GM13976 (cell line): ENCODE measurements at regions of chr11 and their contacts with region 1.

Region 1: DNA sequence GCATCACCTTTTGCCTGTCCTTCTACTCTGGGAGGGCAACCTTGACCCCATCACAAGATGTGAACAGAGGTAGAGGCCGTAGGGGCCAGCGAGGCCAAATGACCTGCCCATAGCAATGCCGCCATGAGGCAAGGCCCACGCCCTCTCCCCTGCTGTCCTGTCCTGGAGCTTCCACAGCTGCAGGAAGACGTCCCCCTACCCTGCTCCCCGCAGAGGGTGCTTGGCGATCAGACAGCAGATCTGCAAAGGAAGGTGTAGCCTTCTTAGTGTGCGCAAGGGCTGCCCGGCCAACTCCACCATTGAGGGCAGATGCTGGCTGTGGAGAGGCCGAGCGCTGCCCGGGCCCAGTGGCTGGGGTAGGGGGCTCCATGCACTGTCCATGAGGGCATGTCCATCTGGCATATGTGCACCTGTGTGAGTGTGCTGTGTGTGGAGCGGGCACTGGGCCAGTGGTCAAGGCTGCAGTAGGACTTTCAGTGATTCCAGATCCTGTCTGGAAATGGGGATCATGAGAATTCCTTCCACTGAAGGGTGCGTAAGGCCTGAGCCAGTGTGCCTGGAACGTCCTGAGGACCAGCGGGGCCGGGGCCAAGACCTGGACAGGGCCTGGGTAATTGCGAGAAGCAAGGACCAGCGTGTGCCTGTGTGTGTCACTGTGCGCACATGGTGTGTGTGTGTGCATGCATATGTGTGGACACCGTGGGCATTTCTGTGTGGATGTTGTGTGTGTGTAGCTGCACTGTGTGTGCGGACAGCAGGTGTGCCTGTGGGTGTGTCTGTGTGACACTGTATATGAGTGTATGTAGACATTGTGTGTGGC is 11.0 kb downstream of the TRPM5 start:
- DNase-seq: no peak
- CTCF ChIP-seq: no peak

Region 2: GRCh38 chr11:2532704-2533586 is 99.6 kb after region 1 on chr11:
- in situ Hi-C with region 1: loop called (anchors 5 kb)
- DNase-seq: peak; percentile 91
- CTCF ChIP-seq: peak; percentile 99

Region 3: DNA sequence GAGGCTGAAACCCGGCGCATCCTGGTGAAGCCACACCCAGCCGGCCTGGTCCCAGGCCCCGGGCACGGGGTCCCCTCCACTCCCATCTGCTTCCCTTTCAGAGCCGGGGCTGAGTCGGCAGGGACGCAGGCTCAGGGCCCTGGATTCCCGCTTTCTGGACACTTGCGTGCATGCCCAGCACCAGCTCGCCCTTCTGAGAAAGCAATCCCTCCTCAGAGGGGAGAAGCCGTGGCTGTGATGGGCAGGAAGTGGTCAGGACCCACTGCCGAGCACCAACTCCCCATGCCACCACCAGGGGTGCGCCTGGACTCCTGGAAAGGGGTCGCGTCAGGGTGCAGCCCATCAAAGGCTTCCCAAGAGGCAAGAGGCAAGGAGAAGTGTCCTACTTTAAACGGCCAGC is 437.1 kb after region 1 on chr11:
- in situ Hi-C with region 1: loop called (anchors 10 kb)
- DNase-seq: no peak
- CTCF ChIP-seq: no peak